HEK293T (cell line): ENCODE measurements at regions of chr12 and their contacts with region 1.

Region 1: DNA sequence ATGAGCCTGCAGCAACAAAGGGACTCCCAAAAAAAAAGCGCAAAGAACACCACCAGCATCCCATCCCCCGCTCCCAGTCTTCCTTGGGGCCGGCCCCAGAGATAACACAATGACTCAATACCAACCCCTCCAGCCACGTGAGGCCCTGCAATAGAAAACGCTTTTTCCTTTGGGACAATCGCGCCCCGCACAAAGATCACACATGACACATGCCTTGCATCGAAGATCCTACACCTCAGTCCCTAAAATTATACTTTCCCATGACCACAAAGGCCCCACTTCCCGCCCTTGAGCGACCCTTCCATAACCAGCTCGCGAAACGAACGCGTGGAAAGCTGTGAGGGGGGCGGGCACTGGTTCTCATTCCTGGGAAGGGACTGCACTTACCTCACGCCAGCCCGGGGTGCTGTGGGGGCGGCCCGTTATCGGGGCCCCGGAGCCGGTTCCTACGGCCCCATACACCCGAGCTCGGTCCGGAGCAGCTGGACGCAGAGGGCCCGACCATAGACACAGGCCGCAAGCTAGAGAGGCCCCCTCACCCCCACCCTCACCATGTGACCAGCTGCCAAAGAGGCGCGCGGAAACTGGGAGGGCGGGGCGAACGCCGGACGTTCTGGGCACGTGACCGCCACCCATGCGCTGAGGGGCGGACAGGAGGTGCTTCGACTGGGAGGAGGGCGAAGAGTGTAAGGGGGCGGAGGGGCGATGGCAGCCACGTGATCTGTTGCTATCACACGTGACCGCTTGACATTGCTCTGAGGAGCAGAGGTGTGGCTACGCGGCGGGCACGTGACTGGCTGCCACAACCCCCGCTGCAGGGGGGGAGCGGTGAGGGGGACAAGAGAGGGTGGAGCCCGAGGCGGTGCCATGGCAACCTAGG is at the start of gene CDK4:
- DNase-seq: peak; percentile 96

Region 2: GRCh38 chr12:57674691-57675090 is 77.3 kb before region 1 on chr12:
- CTCF ChIA-PET with region 1: no interaction called
- POLR2A ChIA-PET with region 1: no interaction called
- DNase-seq: no peak

Region 3: DNA sequence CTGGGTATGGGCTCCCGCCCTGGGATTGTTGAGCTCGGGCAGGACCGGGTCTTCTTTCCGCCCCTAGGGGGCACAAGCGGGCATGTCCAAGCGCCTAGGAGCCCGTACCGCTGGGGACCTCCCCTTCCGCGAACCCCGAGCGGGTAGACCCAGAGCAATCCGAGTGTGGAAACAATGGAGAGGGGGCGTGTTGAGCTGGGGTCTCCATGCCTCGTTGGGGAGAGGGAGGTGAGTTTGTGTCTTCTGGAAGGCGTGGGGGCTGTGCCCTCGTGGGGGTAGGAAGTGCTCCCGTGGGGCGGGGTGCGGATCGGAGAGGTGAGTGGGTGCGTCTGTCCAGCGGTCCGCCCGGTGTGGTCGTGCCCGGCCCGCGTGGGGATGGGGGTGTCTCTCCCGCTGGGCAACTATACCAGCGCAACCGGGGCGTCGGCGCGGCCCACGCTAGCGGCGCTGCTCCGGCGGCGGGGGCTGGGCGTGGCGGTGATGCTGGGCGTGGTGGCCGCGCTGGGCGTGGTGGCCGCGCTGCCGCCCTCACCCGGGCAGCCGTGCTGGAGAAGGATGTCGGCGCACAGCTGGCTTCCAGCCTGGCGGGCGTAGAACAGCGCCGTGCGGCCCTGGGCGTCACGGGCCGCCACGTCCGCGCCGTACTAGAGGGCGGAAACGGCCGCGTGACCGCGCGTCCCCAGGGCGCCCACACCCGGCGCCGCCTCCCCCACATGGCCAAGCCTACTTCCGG is 25.7 kb before region 1 on chr12:
- CTCF ChIA-PET with region 1: interaction called, 4 read pairs
- POLR2A ChIA-PET with region 1: interaction called, 11 read pairs
- DNase-seq: peak; percentile 92

Region 4: DNA sequence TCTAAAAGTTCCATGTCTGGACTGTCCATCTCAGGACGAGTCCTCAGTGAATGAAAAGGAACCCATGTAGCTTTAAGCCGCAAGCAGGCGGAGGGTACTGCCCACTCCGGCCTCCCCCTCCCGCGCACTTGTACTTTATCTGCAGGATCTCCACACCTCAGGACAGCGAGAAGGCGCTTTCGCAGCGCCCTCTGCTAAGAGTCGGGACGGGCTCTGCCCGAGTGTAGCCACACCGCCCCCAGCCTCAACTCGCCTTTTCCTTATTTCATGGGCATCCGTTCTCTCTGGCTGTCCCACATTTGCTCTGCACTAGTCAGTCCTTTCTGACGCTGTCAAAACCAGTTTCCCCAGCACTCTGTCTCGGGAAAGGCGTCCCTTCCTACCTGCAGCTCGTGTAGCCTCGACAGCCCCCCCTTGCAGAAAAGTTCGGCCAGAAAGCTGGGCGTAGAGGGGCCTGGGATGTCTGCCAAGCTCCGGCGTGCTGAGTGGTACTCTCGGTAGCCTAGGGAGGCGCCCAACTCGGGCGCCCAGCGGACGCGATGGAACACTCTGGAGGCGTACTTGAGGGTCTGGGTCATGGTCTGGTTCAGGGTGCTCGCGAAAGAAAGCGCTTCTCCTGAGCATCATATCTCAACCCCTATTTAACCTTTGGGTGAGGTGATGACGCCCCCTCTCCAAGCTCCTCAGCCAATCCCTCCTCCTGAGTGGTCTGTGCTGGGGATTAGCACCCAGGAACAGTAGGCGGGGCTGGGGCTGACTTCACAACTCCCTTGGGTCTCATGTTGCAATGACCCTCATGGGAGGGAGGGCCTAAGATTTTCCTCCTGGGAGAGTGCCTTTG is 14.7 kb after region 1 on chr12 and contains the start of gene CYP27B1:
- CTCF ChIA-PET with region 1: interaction called, 17 read pairs
- POLR2A ChIA-PET with region 1: interaction called, 14 read pairs
- DNase-seq: no peak